B cell (primary cell): ENCODE measurements at regions of chr19 and their contacts with region 1.

Region 1: DNA sequence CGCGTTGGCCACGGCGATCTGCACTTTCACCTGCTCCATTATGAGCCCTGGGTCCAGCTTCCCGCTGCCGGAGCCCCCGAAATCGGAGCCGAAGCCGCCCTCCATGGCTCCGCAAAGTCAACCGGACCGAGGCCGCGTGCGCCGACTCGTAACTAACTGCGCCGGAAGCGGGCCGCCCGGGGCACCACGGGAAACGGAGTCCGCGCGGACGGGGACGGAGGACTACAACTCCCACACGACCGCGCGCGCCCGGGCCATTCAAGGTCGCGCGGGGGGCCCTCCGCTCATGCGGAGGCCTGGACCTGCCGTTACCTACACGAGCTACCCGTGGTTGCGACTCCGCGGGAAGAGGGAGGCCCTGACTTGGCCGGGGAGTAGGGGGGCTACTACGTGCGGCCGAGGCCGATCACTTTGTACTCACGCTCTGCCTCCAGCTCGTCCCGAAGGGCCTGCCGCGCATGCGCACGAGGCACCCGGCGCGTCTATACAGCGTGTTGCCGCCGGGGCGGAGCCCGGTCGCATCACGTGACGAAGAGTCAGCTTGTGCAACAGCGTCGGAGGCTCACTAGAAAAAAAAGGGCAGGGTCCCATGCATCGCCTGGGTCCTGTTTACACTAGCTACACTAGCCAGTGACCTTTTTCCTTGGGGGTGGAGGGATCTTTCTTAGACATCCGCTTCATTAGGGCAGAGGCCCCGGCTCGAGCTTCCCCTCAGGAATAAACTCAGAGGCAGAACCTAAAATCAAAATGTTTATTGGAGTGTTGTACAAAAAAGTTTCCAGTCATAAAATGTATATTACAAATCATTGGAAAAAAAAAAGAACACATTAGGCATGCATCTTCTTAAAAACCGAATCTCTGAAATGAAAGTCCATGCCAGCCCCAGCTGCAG is at the start of gene TIMM13:
- DNase-seq: peak; percentile 99
- ATAC-seq: peak; percentile 93
- H3K4me3 ChIP-seq: peak within 1 kb of the TSS; percentile 57 to 90 (median 74)
- H3K4me3 Mint-ChIP-seq: peak within 1 kb of the TSS; percentile 96
- H3K27ac ChIP-seq: peak within 1 kb of the TSS; percentile 75 to 80
- H3K27ac Mint-ChIP-seq: peak within 1 kb of the TSS; percentile 98
- H3K4me1 ChIP-seq: peaks cover 15 to 21% of the 10 kb centered on the region in 2 donors
- H3K4me1 Mint-ChIP-seq: peaks cover 13% of the 10 kb centered on the region
- H3K27me3 ChIP-seq: no peaks in the 10 kb centered on the region
- H3K27me3 Mint-ChIP-seq: no peaks in the 10 kb centered on the region
- CTCF ChIP-seq: no peak
- total RNA-seq, gene TIMM13: 31.9 and 32.5 TPM in 2 replicates

Region 2: GRCh38 chr19:1725100-1726064 is 702.3 kb before region 1 on chr19:
- CTCF ChIA-PET with region 1: no interaction called
- POLR2A ChIA-PET with region 1: no interaction called
- intact Hi-C with region 1: no loop called
- DNase-seq: peak; percentile 52
- ATAC-seq: peak; percentile 53
- H3K4me3 ChIP-seq: peak overlapping the region in 3 of 5 experiments; percentile 23 to 36 (median 26)
- H3K4me3 Mint-ChIP-seq: peak overlapping the region; percentile 49
- H3K27ac ChIP-seq: no peak overlapping the region
- H3K27ac Mint-ChIP-seq: no peak overlapping the region
- H3K4me1 ChIP-seq: peaks cover 11 to 12% of the 10 kb centered on the region in 2 donors
- H3K4me1 Mint-ChIP-seq: peaks cover 3% of the 10 kb centered on the region
- H3K27me3 ChIP-seq: peaks cover 0 to 61% (median 16%) of the 10 kb centered on the region in 4 experiments
- H3K27me3 Mint-ChIP-seq: peaks cover 56% of the 10 kb centered on the region
- CTCF ChIP-seq: no peak

Region 3: DNA sequence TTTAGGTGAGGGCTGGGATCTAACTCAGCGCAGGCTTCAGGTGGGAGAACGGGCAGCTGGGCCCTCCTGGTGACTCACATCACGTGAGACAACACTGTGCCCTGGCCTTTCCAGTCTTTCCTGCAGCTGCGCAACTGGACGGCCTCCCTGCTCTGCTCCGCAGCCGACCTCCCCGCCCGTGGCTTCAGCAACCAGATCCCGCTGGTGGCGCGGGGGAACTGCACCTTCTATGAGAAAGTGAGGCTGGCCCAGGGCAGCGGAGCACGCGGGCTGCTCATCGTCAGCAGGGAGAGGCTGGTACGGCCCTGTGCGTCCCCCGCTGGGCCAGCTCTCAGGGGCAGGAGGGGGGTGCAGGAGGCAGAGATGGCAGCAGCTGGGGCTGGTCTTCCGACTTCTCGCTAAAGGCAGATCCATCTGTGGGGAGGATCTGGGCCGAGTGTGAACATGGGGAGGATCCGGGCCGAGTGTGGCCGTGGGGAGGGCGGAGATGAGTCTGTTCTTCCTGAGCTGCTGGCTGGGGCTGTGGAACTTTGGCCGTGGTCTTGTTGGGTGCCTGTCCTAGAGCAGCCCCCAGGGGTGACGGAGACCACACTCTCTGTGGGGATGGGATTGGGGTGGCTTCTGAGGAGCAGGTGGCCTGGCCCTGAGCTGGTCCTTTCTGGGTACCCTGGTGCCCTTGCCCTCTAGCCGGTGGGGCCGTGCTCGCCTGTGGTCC is 90.2 kb before region 1 on chr19:
- CTCF ChIA-PET with region 1: no interaction called
- POLR2A ChIA-PET with region 1: no interaction called
- intact Hi-C with region 1: no loop called
- DNase-seq: peak; percentile 43
- ATAC-seq: no peak
- H3K4me3 ChIP-seq: no peak overlapping the region
- H3K4me3 Mint-ChIP-seq: no peak overlapping the region
- H3K27ac ChIP-seq: no peak overlapping the region
- H3K27ac Mint-ChIP-seq: no peak overlapping the region
- H3K4me1 ChIP-seq: peaks cover 15 to 19% of the 10 kb centered on the region in 2 donors
- H3K4me1 Mint-ChIP-seq: peaks cover 31% of the 10 kb centered on the region
- H3K27me3 ChIP-seq: no peaks in the 10 kb centered on the region
- H3K27me3 Mint-ChIP-seq: no peaks in the 10 kb centered on the region
- CTCF ChIP-seq: no peak

Region 4: GRCh38 chr19:2359992-2360685 is 67.5 kb before region 1 on chr19 and contains the start of gene TMPRSS9:
- CTCF ChIA-PET with region 1: no interaction called
- POLR2A ChIA-PET with region 1: no interaction called
- intact Hi-C with region 1: no loop called
- DNase-seq: no peak
- ATAC-seq: no peak
- H3K4me3 ChIP-seq: no peak within 1 kb of the TSS
- H3K4me3 Mint-ChIP-seq: no peak within 1 kb of the TSS
- H3K27ac ChIP-seq: no peak within 1 kb of the TSS
- H3K27ac Mint-ChIP-seq: no peak within 1 kb of the TSS
- H3K4me1 ChIP-seq: peaks cover 6 to 17% of the 10 kb centered on the region in 2 donors
- H3K4me1 Mint-ChIP-seq: peaks cover 5% of the 10 kb centered on the region
- H3K27me3 ChIP-seq: peaks cover 0 to 36% (median 14%) of the 10 kb centered on the region in 4 experiments
- H3K27me3 Mint-ChIP-seq: peaks cover 14% of the 10 kb centered on the region
- CTCF ChIP-seq: no peak
- total RNA-seq, gene TMPRSS9: 0.15 TPM in 1 of 2 replicates, not detected in the other

Region 5: DNA sequence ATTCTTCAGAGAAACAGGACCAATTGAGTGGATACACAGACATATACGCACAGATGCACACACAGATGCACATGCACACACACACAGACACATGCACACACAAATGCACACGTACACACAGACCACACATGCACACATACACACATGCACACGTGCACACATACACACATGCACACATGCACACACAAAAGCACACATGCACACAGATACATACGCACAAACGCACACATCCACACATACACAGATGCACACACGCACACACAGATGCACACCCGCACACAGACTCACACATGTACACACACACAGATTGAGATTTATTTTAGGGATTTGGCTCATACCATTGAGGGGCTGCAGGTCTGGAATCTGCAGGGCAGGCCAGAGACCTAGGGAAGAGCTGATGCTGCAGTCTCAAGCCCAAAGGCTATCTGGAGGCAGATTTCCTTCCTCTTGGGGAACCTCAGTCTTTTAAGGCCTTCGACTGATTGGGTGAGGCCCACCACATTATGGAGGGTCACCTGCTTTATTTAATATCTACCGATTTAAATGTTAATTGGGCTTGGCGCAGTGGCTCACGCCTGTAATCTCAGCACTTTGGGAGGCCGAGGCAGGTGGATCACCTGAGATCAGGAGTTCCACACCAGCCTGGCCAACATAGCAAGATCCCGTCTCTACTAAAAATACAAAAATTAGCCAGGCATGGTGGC is 45.0 kb before region 1 on chr19:
- CTCF ChIA-PET with region 1: no interaction called
- POLR2A ChIA-PET with region 1: no interaction called
- intact Hi-C with region 1: no loop called
- DNase-seq: no peak
- ATAC-seq: no peak
- H3K4me3 ChIP-seq: no peak overlapping the region
- H3K4me3 Mint-ChIP-seq: no peak overlapping the region
- H3K27ac ChIP-seq: no peak overlapping the region
- H3K27ac Mint-ChIP-seq: peak overlapping the region; percentile 21
- H3K4me1 ChIP-seq: peaks cover 6 to 11% of the 10 kb centered on the region in 2 donors
- H3K4me1 Mint-ChIP-seq: peaks cover 10% of the 10 kb centered on the region
- H3K27me3 ChIP-seq: peaks cover 0 to 5% (median 0%) of the 10 kb centered on the region in 4 experiments
- H3K27me3 Mint-ChIP-seq: no peaks in the 10 kb centered on the region
- CTCF ChIP-seq: no peak

Region 6: DNA sequence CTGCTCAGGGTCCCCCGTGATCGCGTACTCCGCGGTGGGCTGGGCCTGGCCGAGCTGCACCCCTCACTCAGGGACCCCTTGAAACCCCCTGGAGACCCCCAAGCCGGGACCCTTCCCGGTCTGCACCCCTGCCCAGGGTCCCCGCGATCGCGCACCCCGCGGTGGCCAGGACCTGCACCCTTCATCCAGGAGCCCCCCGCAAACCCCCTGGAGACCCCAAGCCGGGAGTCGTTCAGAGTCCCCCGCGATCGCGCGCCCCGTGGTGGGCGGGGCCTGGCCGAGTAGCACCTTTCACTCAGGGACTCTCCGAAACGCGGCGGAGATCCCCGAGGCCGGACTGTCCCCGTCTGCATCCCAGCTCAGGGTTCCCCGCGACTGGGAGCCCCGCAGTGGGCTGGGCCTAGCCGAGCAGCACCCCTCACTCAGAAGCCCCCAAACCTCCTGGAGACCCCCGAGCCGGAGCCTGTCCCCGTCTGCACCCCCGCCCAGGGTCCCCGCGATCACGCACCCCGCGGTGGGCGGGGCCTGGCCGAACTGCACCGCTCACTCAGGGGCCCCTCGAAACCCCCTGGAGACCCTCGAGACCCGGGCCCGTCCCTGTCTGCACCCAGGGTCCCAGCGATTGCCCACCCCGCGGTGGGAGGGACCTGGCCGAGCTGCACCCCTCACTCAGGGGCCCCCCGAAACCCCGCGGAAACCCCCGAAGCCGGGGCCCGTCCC is 28.3 kb after region 1 on chr19:
- CTCF ChIA-PET with region 1: interaction called, 7 read pairs
- POLR2A ChIA-PET with region 1: interaction called, 7 read pairs
- intact Hi-C with region 1: loop called (anchors 1 kb)
- DNase-seq: peak; percentile 73
- ATAC-seq: peak; percentile 34
- H3K4me3 ChIP-seq: peak overlapping the region; percentile 48 to 81 (median 76)
- H3K4me3 Mint-ChIP-seq: peak overlapping the region; percentile 84
- H3K27ac ChIP-seq: peak overlapping the region in 1 of 2 donors; percentile 73
- H3K27ac Mint-ChIP-seq: peak overlapping the region; percentile 63
- H3K4me1 ChIP-seq: peaks cover 7 to 26% of the 10 kb centered on the region in 2 donors
- H3K4me1 Mint-ChIP-seq: peaks cover 24% of the 10 kb centered on the region
- H3K27me3 ChIP-seq: no peaks in the 10 kb centered on the region
- H3K27me3 Mint-ChIP-seq: peaks cover under 1% of the 10 kb centered on the region
- CTCF ChIP-seq: no peak